HepG2 (cell line): ENCODE measurements at regions of chr19 and their contacts with region 1.

Region 1: GRCh38 chr19:41746593-41747227 is 8.6 kb upstream of the CEACAM6 start:
- DNase-seq: peak; percentile 29
- ATAC-seq: peak; percentile 86
- H3K4me3 ChIP-seq: no peak overlapping the region
- H3K27ac ChIP-seq: no peak overlapping the region
- H3K4me1 ChIP-seq: no peaks in the 10 kb centered on the region
- H3K27me3 ChIP-seq: peaks cover 0 to 18% of the 10 kb centered on the region in 2 experiments; a peak in 1 of 5 replicates
- CTCF ChIP-seq: peak; percentile 69
- EP300 ChIP-seq: no peak
- POLR2A ChIP-seq: no peak
- RAD21 ChIP-seq: no peak

Region 2: DNA sequence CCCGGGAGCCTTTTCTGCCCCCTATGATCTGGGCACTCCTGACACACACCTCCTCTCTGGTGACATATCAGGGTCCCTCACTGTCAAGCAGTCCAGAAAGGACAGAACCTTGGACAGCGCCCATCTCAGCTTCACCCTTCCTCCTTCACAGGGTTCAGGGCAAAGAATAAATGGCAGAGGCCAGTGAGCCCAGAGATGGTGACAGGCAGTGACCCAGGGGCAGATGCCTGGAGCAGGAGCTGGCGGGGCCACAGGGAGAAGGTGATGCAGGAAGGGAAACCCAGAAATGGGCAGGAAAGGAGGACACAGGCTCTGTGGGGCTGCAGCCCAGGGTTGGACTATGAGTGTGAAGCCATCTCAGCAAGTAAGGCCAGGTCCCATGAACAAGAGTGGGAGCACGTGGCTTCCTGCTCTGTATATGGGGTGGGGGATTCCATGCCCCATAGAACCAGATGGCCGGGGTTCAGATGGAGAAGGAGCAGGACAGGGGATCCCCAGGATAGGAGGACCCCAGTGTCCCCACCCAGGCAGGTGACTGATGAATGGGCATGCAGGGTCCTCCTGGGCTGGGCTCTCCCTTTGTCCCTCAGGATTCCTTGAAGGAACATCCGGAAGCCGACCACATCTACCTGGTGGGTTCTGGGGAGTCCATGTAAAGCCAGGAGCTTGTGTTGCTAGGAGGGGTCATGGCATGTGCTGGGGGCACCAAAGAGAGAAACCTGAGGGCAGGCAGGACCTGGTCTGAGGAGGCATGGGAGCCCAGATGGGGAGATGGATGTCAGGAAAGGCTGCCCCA is 50.1 kb before region 1 on chr19:
- CTCF ChIA-PET with region 1: no interaction called
- POLR2A ChIA-PET with region 1: no interaction called
- in situ Hi-C with region 1: no loop called
- intact Hi-C with region 1: no loop called
- DNase-seq: no peak
- ATAC-seq: peak; percentile 36; the same call in 1 of the 3 replicates
- H3K4me3 ChIP-seq: no peak overlapping the region
- H3K27ac ChIP-seq: no peak overlapping the region
- H3K4me1 ChIP-seq: no peaks in the 10 kb centered on the region
- H3K27me3 ChIP-seq: peaks cover 0 to 4% of the 10 kb centered on the region in 2 experiments; a peak in 1 of 5 replicates
- CTCF ChIP-seq: no peak
- EP300 ChIP-seq: no peak
- POLR2A ChIP-seq: no peak
- RAD21 ChIP-seq: no peak

Region 3: GRCh38 chr19:41706741-41707501 is 39.8 kb before region 1 on chr19:
- CTCF ChIA-PET with region 1: interaction called, 12 read pairs
- POLR2A ChIA-PET with region 1: no interaction called
- in situ Hi-C with region 1: no loop called
- intact Hi-C with region 1: loop called (anchors 2 kb)
- DNase-seq: peak; percentile 64
- ATAC-seq: peak; percentile 94
- H3K4me3 ChIP-seq: peak overlapping the region in 1 of 3 experiments; percentile 57; a peak in 1 of 6 replicates
- H3K27ac ChIP-seq: no peak overlapping the region
- H3K4me1 ChIP-seq: 0 out of 2 replicates have a peak, but pooled peaks cover 5% of the 10 kb centered on the region
- H3K27me3 ChIP-seq: peaks cover 0 to 22% of the 10 kb centered on the region in 2 experiments; a peak in 3 of 5 replicates
- CTCF ChIP-seq: peak; percentile 85
- EP300 ChIP-seq: no peak
- POLR2A ChIP-seq: no peak
- RAD21 ChIP-seq: peak; percentile 72; the same call in 1 of the 2 replicates